Right lobe of liver (tissue), 6 donors: ENCODE measurements at regions of chr11 and their contacts with region 1.

Region 1: GRCh38 chr11:75248690-75249268 is 8.2 kb downstream of the TPBGL start:
- DNase-seq: peak; percentile 84 to 89 (median 85)
- ATAC-seq: peak; percentile 97 to 99 (median 98)
- H3K4me3 ChIP-seq: no peak overlapping the region
- H3K27ac ChIP-seq: no peak overlapping the region
- H3K4me1 ChIP-seq: peaks cover 0 to 3% (median 0%) of the 10 kb centered on the region in 4 donors
- H3K27me3 ChIP-seq: no peaks in the 10 kb centered on the region
- CTCF ChIP-seq: peak; percentile 99 to 100 (median 100)
- POLR2A ChIP-seq: no peak

Region 2: DNA sequence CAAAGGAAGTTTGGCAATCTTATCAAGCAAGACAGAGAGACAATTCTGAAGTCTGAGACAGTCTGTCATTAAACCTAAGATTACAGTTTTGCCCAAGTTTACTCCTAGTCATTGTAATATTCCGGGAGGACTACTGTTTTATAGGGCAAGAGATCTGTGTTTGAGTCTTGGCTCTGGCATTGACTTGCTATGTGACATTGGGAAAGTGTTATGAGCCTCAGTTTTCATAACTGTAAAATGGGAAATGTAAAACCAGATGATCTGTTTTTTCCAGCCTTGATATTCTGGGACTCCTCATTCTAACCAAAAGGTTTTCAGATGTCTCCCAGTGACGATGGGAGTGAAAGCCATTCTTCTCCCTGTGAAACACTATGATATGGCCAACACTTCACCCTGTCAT is 122.2 kb before region 1 on chr11:
- intact Hi-C with region 1: no loop called
- DNase-seq: no peak
- ATAC-seq: no peak
- H3K4me3 ChIP-seq: no peak overlapping the region
- H3K27ac ChIP-seq: no peak overlapping the region
- H3K4me1 ChIP-seq: no peaks in the 10 kb centered on the region
- H3K27me3 ChIP-seq: no peaks in the 10 kb centered on the region
- CTCF ChIP-seq: no peak
- POLR2A ChIP-seq: no peak

Region 3: GRCh38 chr11:75214411-75214821 is 34.4 kb before region 1 on chr11:
- intact Hi-C with region 1: loop called (anchors 5 kb)
- DNase-seq: peak; percentile 71 to 80 (median 74)
- ATAC-seq: peak; percentile 81 to 92 (median 86)
- H3K4me3 ChIP-seq: no peak overlapping the region
- H3K27ac ChIP-seq: no peak overlapping the region
- H3K4me1 ChIP-seq: no peaks in the 10 kb centered on the region
- H3K27me3 ChIP-seq: no peaks in the 10 kb centered on the region
- CTCF ChIP-seq: peak in 1 of 4 donors; percentile 20
- POLR2A ChIP-seq: no peak